ENCODE measurements at regions of chr2 and their contacts with region 1.

Region 1: DNA sequence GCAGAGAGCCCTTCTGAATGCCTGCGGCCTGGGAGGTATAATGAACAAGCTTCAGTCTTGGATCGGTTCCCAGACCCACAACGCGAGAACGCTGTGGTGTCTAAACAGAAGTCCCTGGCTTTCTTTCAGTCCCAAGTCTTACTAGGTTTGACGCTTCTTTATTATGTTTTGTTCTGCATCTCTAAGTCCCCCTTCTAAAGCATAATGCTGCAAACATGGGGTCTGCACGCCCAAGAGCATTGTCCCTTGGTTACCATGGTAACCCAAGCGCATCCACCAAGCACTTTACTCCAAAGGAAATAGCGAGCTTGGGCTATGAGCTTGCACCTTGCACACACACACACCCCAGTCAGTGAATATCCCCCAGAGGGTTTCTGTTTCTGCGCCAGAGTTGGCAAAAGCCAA is 193.7 kb downstream of the INO80D start:
- DNase-seq: no peak
- H3K4me3 ChIP-seq: no peak overlapping the region
- H3K27ac ChIP-seq: no peak overlapping the region
- H3K4me1 ChIP-seq: no peaks in the 10 kb centered on the region; a peak in 1 of 7 replicates
- H3K27me3 ChIP-seq: no peaks in the 10 kb centered on the region
- CTCF ChIP-seq: no peak
- EP300 ChIP-seq: no peak
- POLR2A ChIP-seq: no peak
- RAD21 ChIP-seq: no peak

Region 2: GRCh38 chr2:205878999-205879761 is 13.1 kb before region 1 on chr2:
- CTCF ChIA-PET with region 1: interaction called, 12 read pairs
- POLR2A ChIA-PET with region 1: interaction called, 3 read pairs
- DNase-seq: no peak
- H3K4me3 ChIP-seq: no peak overlapping the region
- H3K27ac ChIP-seq: no peak overlapping the region
- H3K4me1 ChIP-seq: peaks cover 0 to 5% (median 0%) of the 10 kb centered on the region in 4 experiments; a peak in 2 of 7 replicates
- H3K27me3 ChIP-seq: no peaks in the 10 kb centered on the region
- CTCF ChIP-seq: no peak
- EP300 ChIP-seq: no peak
- POLR2A ChIP-seq: no peak
- RAD21 ChIP-seq: no peak

Region 3: GRCh38 chr2:206056286-206056685 is 164.0 kb after region 1 on chr2:
- CTCF ChIA-PET with region 1: no interaction called
- POLR2A ChIA-PET with region 1: no interaction called
- DNase-seq: no peak
- H3K4me3 ChIP-seq: no peak overlapping the region
- H3K27ac ChIP-seq: no peak overlapping the region
- H3K4me1 ChIP-seq: no peaks in the 10 kb centered on the region
- H3K27me3 ChIP-seq: no peaks in the 10 kb centered on the region
- CTCF ChIP-seq: no peak
- EP300 ChIP-seq: no peak
- POLR2A ChIP-seq: no peak
- RAD21 ChIP-seq: no peak

Measured in H1 (cell line).